Naive thymus-derived CD4-positive, alpha-beta T cell (primary cell): ENCODE measurements at regions of chr17 and their contacts with region 1.

Region 1: GRCh38 chr17:4908301-4908700 is 5.4 kb upstream of the CHRNE start:
- DNase-seq: peak in 3 of 9 donors; percentile 20 to 31 (median 27)
- ATAC-seq: no peak
- H3K4me3 ChIP-seq: peak overlapping the region; percentile 13
- H3K4me3 Mint-ChIP-seq: no peak overlapping the region
- H3K27ac ChIP-seq: peak overlapping the region; percentile 56
- H3K27ac Mint-ChIP-seq: no peak overlapping the region
- H3K4me1 ChIP-seq: peaks cover 10 to 25% of the 10 kb centered on the region in 2 donors
- H3K4me1 Mint-ChIP-seq: peaks cover 4 to 11% (median 6%) of the 10 kb centered on the region in 7 donors
- H3K27me3 ChIP-seq: no peaks in the 10 kb centered on the region
- H3K27me3 Mint-ChIP-seq: peaks cover 0 to 15% (median 0%) of the 10 kb centered on the region in 5 donors

Region 2: DNA sequence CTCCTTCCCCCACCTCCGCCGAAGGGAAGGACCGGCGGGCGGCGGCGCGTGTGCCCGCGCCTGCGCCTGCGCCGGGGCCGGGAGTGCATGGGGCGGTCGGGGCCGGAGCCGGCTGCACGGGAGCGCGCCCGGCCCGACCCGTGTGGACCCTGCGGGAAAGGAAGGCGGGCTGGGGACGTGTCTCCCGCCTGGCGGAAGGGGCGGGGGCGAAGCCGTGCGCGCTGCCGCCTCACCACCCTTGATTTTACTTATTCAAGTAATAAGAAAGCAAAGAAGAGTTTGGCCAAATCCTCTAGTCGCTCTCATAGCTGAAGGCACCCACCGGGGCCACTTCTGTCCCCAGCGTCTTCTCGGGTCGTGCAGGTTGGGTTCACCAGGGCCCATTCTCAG is 40.6 kb after region 1 on chr17:
- CTCF ChIA-PET with region 1: interaction called, 5 read pairs
- POLR2A ChIA-PET with region 1: interaction called, 12 read pairs
- intact Hi-C with region 1: loop called in 1 of 2 experiments (anchors 1 kb)
- DNase-seq: peak in 7 of 9 donors; percentile 69 to 84 (median 79)
- ATAC-seq: peak; percentile 58
- H3K4me3 ChIP-seq: peak overlapping the region; percentile 98
- H3K4me3 Mint-ChIP-seq: peak overlapping the region; percentile 92 to 100 (median 98)
- H3K27ac ChIP-seq: peak overlapping the region; percentile 89
- H3K27ac Mint-ChIP-seq: peak overlapping the region; percentile 83 to 100 (median 96)
- H3K4me1 ChIP-seq: peaks cover 27 to 35% of the 10 kb centered on the region in 2 donors
- H3K4me1 Mint-ChIP-seq: peaks cover 37 to 50% (median 43%) of the 10 kb centered on the region in 7 donors
- H3K27me3 ChIP-seq: no peaks in the 10 kb centered on the region
- H3K27me3 Mint-ChIP-seq: peaks cover 0 to 2% (median 0%) of the 10 kb centered on the region in 5 donors

Region 3: GRCh38 chr17:4980644-4981216 is 72.4 kb after region 1 on chr17:
- CTCF ChIA-PET with region 1: interaction called, 6 read pairs
- POLR2A ChIA-PET with region 1: interaction called, 3 read pairs
- intact Hi-C with region 1: loop called (anchors 1 kb)
- DNase-seq: peak in 7 of 9 donors; percentile 58 to 77 (median 74)
- ATAC-seq: peak; percentile 92
- H3K4me3 ChIP-seq: no peak overlapping the region
- H3K4me3 Mint-ChIP-seq: peak overlapping the region in 8 of 10 donors; percentile 2 to 83 (median 41)
- H3K27ac ChIP-seq: no peak overlapping the region
- H3K27ac Mint-ChIP-seq: peak overlapping the region; percentile 31 to 78 (median 67)
- H3K4me1 ChIP-seq: peaks cover 3 to 14% of the 10 kb centered on the region in 2 donors
- H3K4me1 Mint-ChIP-seq: peaks cover 13 to 34% (median 26%) of the 10 kb centered on the region in 7 donors
- H3K27me3 ChIP-seq: no peaks in the 10 kb centered on the region
- H3K27me3 Mint-ChIP-seq: no peaks in the 10 kb centered on the region

Region 4: GRCh38 chr17:5019475-5019956 is 111.2 kb after region 1 on chr17:
- CTCF ChIA-PET with region 1: no interaction called
- POLR2A ChIA-PET with region 1: no interaction called
- intact Hi-C with region 1: loop called in 1 of 2 experiments (anchors 1 kb)
- DNase-seq: peak in 5 of 9 donors; percentile 22 to 42 (median 39)
- ATAC-seq: peak; percentile 73
- H3K4me3 ChIP-seq: no peak overlapping the region
- H3K4me3 Mint-ChIP-seq: no peak overlapping the region
- H3K27ac ChIP-seq: no peak overlapping the region
- H3K27ac Mint-ChIP-seq: peak overlapping the region in 6 of 9 donors; percentile 49 to 78 (median 73)
- H3K4me1 ChIP-seq: no peaks in the 10 kb centered on the region
- H3K4me1 Mint-ChIP-seq: peaks cover 4 to 15% (median 7%) of the 10 kb centered on the region in 7 donors
- H3K27me3 ChIP-seq: no peaks in the 10 kb centered on the region
- H3K27me3 Mint-ChIP-seq: no peaks in the 10 kb centered on the region

Region 5: DNA sequence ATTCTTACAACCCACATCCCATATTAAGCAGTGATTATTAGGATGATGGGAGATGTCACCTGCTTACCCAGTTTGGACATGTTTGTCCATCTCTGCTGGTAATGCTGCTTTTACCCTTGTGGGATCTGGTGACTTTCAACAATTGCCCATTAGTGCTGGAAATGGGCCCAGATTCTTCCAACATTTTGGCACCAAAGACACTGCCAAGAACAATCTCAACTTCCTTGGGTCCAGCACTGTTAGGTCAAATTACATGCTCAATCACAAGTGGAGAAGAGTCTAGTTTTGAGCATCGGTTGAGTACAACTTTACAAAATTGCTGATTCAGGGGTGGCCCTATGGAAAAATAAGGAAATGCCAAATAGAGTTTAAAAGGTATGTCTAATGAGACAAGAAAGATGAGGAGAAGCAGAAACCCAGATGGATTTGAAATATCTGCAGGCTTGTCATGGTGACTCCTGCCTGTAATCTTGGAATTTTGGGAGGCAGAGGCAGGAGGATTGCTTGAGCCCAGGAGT is 157.0 kb after region 1 on chr17:
- CTCF ChIA-PET with region 1: interaction called, 9 read pairs
- POLR2A ChIA-PET with region 1: no interaction called
- intact Hi-C with region 1: loop called (anchors 1 kb)
- DNase-seq: no peak
- ATAC-seq: no peak
- H3K4me3 ChIP-seq: no peak overlapping the region
- H3K4me3 Mint-ChIP-seq: no peak overlapping the region
- H3K27ac ChIP-seq: no peak overlapping the region
- H3K27ac Mint-ChIP-seq: no peak overlapping the region
- H3K4me1 ChIP-seq: peaks cover 0 to 2% of the 10 kb centered on the region in 2 donors
- H3K4me1 Mint-ChIP-seq: peaks cover 0 to 10% (median 7%) of the 10 kb centered on the region in 7 donors
- H3K27me3 ChIP-seq: no peaks in the 10 kb centered on the region
- H3K27me3 Mint-ChIP-seq: no peaks in the 10 kb centered on the region

Region 6: DNA sequence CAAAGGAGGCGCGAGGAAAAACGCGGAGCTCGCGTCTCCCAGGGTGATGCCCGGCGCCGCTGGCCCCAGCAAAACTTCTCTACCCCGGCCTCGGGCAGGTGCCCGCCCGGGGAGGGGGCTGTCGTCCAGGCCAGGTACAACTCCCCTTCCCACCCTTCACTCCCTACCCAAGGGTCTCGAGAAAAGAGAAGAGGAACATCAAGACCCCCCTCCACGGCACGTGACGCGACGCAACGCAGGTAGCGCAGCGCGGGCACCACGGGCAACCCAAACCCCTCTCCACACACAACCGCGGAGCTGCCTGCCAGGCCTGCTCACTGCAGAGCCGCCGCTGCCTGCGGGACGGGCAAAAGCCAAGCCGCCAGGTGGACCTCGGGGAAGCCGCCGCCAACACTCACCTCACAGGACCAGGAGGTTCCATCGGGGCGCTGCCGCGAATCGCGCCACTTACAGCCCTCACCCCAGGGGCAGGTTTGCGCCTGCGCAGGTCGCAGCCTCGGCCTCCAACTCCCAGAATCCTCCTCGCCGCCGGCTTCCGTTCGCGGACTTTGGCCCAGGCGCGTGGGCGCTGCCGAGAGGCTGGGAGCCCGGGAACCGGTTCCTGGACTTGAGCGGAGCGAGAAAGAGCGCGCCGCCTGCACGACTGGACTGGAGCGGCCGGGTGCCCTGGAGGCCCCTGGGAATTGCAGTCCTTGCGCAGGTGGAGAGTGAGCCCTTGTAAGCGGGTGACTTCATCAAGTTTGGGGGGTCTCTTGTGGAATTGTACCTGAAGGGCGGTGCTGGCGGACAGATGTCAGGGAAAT is 203.3 kb after region 1 on chr17 and contains the start of gene ZNF232:
- CTCF ChIA-PET with region 1: no interaction called
- POLR2A ChIA-PET with region 1: no interaction called
- intact Hi-C with region 1: no loop called
- DNase-seq: peak; percentile 83 to 95 (median 87)
- ATAC-seq: peak; percentile 94
- H3K4me3 ChIP-seq: peak within 1 kb of the TSS; percentile 80
- H3K4me3 Mint-ChIP-seq: peak within 1 kb of the TSS; percentile 82 to 96 (median 92)
- H3K27ac ChIP-seq: peak within 1 kb of the TSS; percentile 74
- H3K27ac Mint-ChIP-seq: peak within 1 kb of the TSS; percentile 59 to 96 (median 88)
- H3K4me1 ChIP-seq: peaks cover 9% of the 10 kb centered on the region in 2 donors
- H3K4me1 Mint-ChIP-seq: peaks cover 14 to 48% (median 36%) of the 10 kb centered on the region in 7 donors
- H3K27me3 ChIP-seq: peaks cover 0 to 3% of the 10 kb centered on the region in 2 donors
- H3K27me3 Mint-ChIP-seq: peaks cover 12 to 19% (median 16%) of the 10 kb centered on the region in 5 donors
- total RNA-seq, gene ZNF232: 5.1 to 20.3 (median 11.2) TPM